Activated CD8-positive, alpha-beta T cell treated with anti-CD3 and anti-CD28 coated beads for 36 hours (primary cell): ENCODE measurements at regions of chr1 and their contacts with region 1.

Region 1: GRCh38 chr1:43934101-43934985 is 742 bp downstream of the ARTN start:
- DNase-seq: peak; percentile 76
- ATAC-seq: peak; percentile 64
- H3K4me3 Mint-ChIP-seq: peak overlapping the region; percentile 41
- H3K27ac Mint-ChIP-seq: no peak overlapping the region
- H3K4me1 Mint-ChIP-seq: peaks cover 24% of the 10 kb centered on the region
- H3K27me3 Mint-ChIP-seq: peaks cover 25% of the 10 kb centered on the region
- CTCF ChIP-seq: peak; percentile 79

Region 2: GRCh38 chr1:43650310-43651085 is 283.8 kb before region 1 on chr1:
- CTCF ChIA-PET with region 1: interaction called, 18 read pairs
- POLR2A ChIA-PET with region 1: interaction called, 3 read pairs
- intact Hi-C with region 1: no loop called
- DNase-seq: peak; percentile 98
- ATAC-seq: peak; percentile 81
- H3K4me3 Mint-ChIP-seq: peak overlapping the region; percentile 100
- H3K27ac Mint-ChIP-seq: peak overlapping the region; percentile 94
- H3K4me1 Mint-ChIP-seq: peaks cover 26% of the 10 kb centered on the region
- H3K27me3 Mint-ChIP-seq: peaks cover 1% of the 10 kb centered on the region
- CTCF ChIP-seq: no peak

Region 3: GRCh38 chr1:43814401-43814800 is 119.9 kb before region 1 on chr1:
- CTCF ChIA-PET with region 1: interaction called, 10 read pairs
- POLR2A ChIA-PET with region 1: interaction called, 3 read pairs
- intact Hi-C with region 1: no loop called
- DNase-seq: no peak
- ATAC-seq: no peak
- H3K4me3 Mint-ChIP-seq: no peak overlapping the region
- H3K27ac Mint-ChIP-seq: no peak overlapping the region
- H3K4me1 Mint-ChIP-seq: no peaks in the 10 kb centered on the region
- H3K27me3 Mint-ChIP-seq: no peaks in the 10 kb centered on the region
- CTCF ChIP-seq: no peak

Region 4: GRCh38 chr1:43908863-43909262 is 25.5 kb before region 1 on chr1:
- CTCF ChIA-PET with region 1: interaction called, 10 read pairs
- POLR2A ChIA-PET with region 1: interaction called, 3 read pairs
- intact Hi-C with region 1: no loop called
- DNase-seq: no peak
- ATAC-seq: no peak
- H3K4me3 Mint-ChIP-seq: no peak overlapping the region
- H3K27ac Mint-ChIP-seq: no peak overlapping the region
- H3K4me1 Mint-ChIP-seq: no peaks in the 10 kb centered on the region
- H3K27me3 Mint-ChIP-seq: no peaks in the 10 kb centered on the region
- CTCF ChIP-seq: no peak

Region 5: GRCh38 chr1:43974443-43975248 is 40.3 kb after region 1 on chr1 and contains the start of gene ATP6V0B:
- CTCF ChIA-PET with region 1: interaction called, 16 read pairs
- POLR2A ChIA-PET with region 1: no interaction called
- intact Hi-C with region 1: no loop called
- DNase-seq: peak; percentile 98
- ATAC-seq: peak; percentile 72
- H3K4me3 Mint-ChIP-seq: peak within 1 kb of the TSS; percentile 90
- H3K27ac Mint-ChIP-seq: peak within 1 kb of the TSS; percentile 90
- H3K4me1 Mint-ChIP-seq: peaks cover 48% of the 10 kb centered on the region
- H3K27me3 Mint-ChIP-seq: no peaks in the 10 kb centered on the region
- CTCF ChIP-seq: no peak
- total RNA-seq, gene ATP6V0B: 67.6 to 75.5 TPM

Region 6: GRCh38 chr1:44220001-44220733 is 285.8 kb after region 1 on chr1:
- CTCF ChIA-PET with region 1: no interaction called
- POLR2A ChIA-PET with region 1: no interaction called
- intact Hi-C with region 1: no loop called
- DNase-seq: no peak
- ATAC-seq: no peak
- H3K4me3 Mint-ChIP-seq: no peak overlapping the region
- H3K27ac Mint-ChIP-seq: no peak overlapping the region
- H3K4me1 Mint-ChIP-seq: peaks cover 17% of the 10 kb centered on the region
- H3K27me3 Mint-ChIP-seq: no peaks in the 10 kb centered on the region
- CTCF ChIP-seq: no peak